Transverse colon (tissue), 4 donors: ENCODE measurements at regions of chr5 and their contacts with region 1.

Region 1: GRCh38 chr5:3020426-3020825 is 268.9 kb upstream of the IRX2 start:
- DNase-seq: no peak
- H3K4me3 ChIP-seq: no peak overlapping the region
- H3K27ac ChIP-seq: no peak overlapping the region
- H3K4me1 ChIP-seq: no peaks in the 10 kb centered on the region
- H3K27me3 ChIP-seq: no peaks in the 10 kb centered on the region
- CTCF ChIP-seq: no peak
- EP300 ChIP-seq: no peak
- POLR2A ChIP-seq: no peak

Region 2: DNA sequence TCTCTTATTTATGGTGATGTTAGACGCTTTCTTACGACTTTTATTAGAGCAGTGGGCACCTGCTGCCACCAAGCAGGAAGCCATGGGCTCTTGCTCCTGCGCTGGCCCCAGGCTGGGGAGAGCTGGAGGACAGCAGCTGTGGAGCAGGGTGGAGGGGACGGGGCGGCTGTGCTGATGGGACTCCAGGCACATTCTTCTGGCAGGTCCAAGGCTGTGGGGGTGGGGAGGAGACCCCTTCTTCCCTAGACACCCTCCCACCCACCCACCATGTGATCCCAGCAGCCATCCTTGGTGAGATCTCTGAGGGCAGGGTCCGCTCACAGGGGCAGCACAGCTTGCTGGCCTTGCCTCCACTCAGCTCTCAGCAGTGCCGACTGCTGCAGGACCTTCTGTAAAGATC is 945.1 kb before region 1 on chr5:
- in situ Hi-C with region 1: no loop called
- intact Hi-C with region 1: loop called (anchors 5 kb)
- DNase-seq: no peak
- H3K4me3 ChIP-seq: no peak overlapping the region
- H3K27ac ChIP-seq: no peak overlapping the region
- H3K4me1 ChIP-seq: no peaks in the 10 kb centered on the region
- H3K27me3 ChIP-seq: no peaks in the 10 kb centered on the region
- CTCF ChIP-seq: no peak
- EP300 ChIP-seq: no peak
- POLR2A ChIP-seq: no peak

Region 3: DNA sequence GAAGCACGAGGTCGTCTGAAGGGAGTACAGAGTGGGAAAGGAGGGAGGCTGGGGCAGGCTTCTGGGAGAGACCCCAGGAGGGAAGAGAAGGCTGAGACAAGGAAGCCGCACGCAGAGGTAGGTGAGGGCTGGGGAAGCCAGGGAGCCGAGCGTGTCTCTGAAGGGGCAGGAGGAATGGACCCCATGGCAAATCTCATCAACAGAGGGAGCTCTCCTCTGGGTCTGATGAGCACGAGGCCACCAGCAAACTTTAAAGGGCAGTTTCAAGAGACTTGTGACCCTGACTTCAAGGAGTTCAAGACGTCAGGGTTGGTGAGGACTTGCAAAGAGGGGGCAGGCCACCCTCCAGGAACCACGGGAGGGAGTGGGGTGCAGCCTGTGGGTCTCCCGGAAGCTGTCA is 57.3 kb after region 1 on chr5:
- in situ Hi-C with region 1: no loop called
- intact Hi-C with region 1: loop called (anchors 1 kb)
- DNase-seq: no peak
- H3K4me3 ChIP-seq: no peak overlapping the region
- H3K27ac ChIP-seq: no peak overlapping the region
- H3K4me1 ChIP-seq: no peaks in the 10 kb centered on the region
- H3K27me3 ChIP-seq: no peaks in the 10 kb centered on the region
- CTCF ChIP-seq: no peak
- EP300 ChIP-seq: no peak
- POLR2A ChIP-seq: no peak

Region 4: GRCh38 chr5:3163626-3164025 is 143.2 kb after region 1 on chr5:
- in situ Hi-C with region 1: no loop called
- intact Hi-C with region 1: no loop called
- DNase-seq: no peak
- H3K4me3 ChIP-seq: no peak overlapping the region
- H3K27ac ChIP-seq: no peak overlapping the region
- H3K4me1 ChIP-seq: no peaks in the 10 kb centered on the region
- H3K27me3 ChIP-seq: no peaks in the 10 kb centered on the region
- CTCF ChIP-seq: no peak
- EP300 ChIP-seq: no peak
- POLR2A ChIP-seq: no peak